ENCODE measurements at regions of chr19 and their contacts with region 1.

Region 1: GRCh38 chr19:39514840-39515550 is at the start of gene SELENOV:
- DNase-seq: peak; percentile 49
- ATAC-seq: peak; percentile 76
- H3K4me3 Mint-ChIP-seq: peak within 1 kb of the TSS; percentile 60
- H3K27ac Mint-ChIP-seq: no peak within 1 kb of the TSS
- H3K4me1 Mint-ChIP-seq: peaks cover 8% of the 10 kb centered on the region
- H3K27me3 Mint-ChIP-seq: peaks cover 40% of the 10 kb centered on the region
- CTCF ChIP-seq: no peak
- total RNA-seq, gene SELENOV: not detected

Region 2: GRCh38 chr19:39502640-39503417 is 12.2 kb before region 1 on chr19:
- CTCF ChIA-PET with region 1: interaction called, 15 read pairs
- POLR2A ChIA-PET with region 1: no interaction called
- intact Hi-C with region 1: no loop called
- DNase-seq: peak; percentile 76
- ATAC-seq: peak; percentile 67
- H3K4me3 Mint-ChIP-seq: no peak overlapping the region
- H3K27ac Mint-ChIP-seq: no peak overlapping the region
- H3K4me1 Mint-ChIP-seq: peaks cover 33% of the 10 kb centered on the region
- H3K27me3 Mint-ChIP-seq: peaks cover 64% of the 10 kb centered on the region
- CTCF ChIP-seq: peak; percentile 98

Region 3: DNA sequence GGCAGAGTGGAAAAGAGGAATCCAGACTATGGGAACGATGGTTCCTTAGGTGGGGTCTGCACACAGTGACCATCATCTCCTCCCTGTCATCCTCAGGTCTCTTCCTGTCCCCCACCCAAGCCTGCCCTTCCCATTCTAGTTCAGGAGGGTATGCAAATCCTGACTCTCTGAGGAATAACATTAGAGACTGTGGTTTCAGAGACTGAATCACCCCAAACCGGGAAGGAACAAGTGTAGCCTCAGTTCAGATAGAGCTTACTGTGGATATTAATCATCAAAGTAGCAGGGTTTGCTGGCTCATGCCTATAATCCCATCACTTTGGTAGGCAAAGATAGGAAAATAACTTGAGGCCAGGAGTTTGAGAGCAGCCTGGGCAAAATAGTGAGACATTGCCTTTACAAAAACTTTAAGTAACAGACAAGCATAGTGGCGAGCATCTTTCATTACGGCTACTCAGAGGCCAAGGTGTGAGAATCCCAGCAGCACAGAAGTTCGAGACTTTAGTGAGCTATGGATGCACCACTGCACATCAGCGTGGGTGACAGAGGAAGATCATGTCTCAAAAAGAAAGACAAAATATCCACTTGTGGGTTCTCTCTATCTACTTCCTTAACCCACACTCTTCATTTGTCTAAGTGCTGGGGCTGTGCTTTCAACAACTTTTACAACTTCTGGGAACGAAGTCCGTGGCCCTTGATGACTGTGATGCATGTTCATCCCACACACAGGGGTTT is 68.1 kb after region 1 on chr19:
- CTCF ChIA-PET with region 1: no interaction called
- POLR2A ChIA-PET with region 1: no interaction called
- intact Hi-C with region 1: no loop called
- DNase-seq: no peak
- ATAC-seq: no peak
- H3K4me3 Mint-ChIP-seq: no peak overlapping the region
- H3K27ac Mint-ChIP-seq: no peak overlapping the region
- H3K4me1 Mint-ChIP-seq: no peaks in the 10 kb centered on the region
- H3K27me3 Mint-ChIP-seq: peaks cover 40% of the 10 kb centered on the region
- CTCF ChIP-seq: no peak

Measured in activated CD8-positive, alpha-beta T cell treated with anti-CD3 and anti-CD28 coated beads for 36 hours (primary cell).